HEK293 (cell line): ENCODE measurements at regions of chr5 and their contacts with region 1.

Region 1: DNA sequence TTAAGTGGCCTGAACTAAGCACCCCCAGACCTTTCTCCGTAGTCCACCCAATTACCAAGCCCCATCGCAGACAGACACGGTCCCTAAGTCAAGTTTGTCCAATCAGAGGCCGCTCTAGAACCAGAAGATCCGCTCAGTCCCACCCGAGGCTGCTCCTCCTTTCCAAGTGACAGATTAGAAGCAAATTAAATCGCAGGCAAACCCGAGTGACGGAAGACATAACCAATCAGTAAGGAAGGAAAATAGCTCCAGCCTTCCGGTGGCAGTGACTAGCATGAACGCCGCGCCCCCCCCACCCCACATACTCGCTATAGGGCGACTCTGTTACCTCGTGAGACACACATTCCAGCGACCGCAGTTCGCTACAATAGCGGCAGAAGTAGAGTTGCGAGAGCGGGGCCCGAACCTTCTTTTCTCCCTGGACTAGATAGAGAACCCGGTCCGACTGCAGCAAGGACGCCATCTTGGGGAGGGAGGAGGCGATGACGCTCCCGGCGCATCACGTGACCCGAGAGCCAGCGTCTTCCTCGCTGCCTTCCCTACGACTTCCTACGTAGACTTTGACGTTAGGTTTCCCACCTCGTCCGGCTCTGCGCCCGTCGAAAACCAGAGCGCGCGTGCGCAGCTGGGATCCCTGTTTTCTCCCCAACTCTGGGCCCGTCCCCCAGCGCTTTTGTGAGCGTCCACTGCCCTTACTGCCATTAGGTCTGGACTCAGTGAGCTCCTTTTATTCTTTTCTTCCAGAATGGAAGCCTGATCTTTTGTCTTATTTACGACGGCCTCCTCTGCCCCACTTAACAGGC is at the start of gene DCTN4:
- H3K4me3 ChIP-seq: peak within 1 kb of the TSS; percentile 61
- H3K27ac ChIP-seq: peak within 1 kb of the TSS; percentile 77
- H3K4me1 ChIP-seq: peaks cover 12% of the 10 kb centered on the region
- CTCF ChIP-seq: peak; percentile 74

Region 2: GRCh38 chr5:150778517-150779396 is 20.0 kb after region 1 on chr5 and contains the start of gene SMIM3:
- CTCF ChIA-PET with region 1: interaction called, 5 read pairs
- POLR2A ChIA-PET with region 1: interaction called, 12 read pairs
- H3K4me3 ChIP-seq: peak within 1 kb of the TSS; percentile 64
- H3K27ac ChIP-seq: peak within 1 kb of the TSS; percentile 33; the same call in 1 of the 2 replicates
- H3K4me1 ChIP-seq: peaks cover 11% of the 10 kb centered on the region
- CTCF ChIP-seq: peak; percentile 70

Region 3: GRCh38 chr5:151040211-151040747 is 281.5 kb after region 1 on chr5:
- CTCF ChIA-PET with region 1: no interaction called
- POLR2A ChIA-PET with region 1: no interaction called
- H3K4me3 ChIP-seq: no peak overlapping the region
- H3K27ac ChIP-seq: no peak overlapping the region
- H3K4me1 ChIP-seq: 0 out of 2 replicates have a peak, but pooled peaks cover 3% of the 10 kb centered on the region
- CTCF ChIP-seq: no peak